K562 (cell line): ENCODE measurements at regions of chr1 and their contacts with region 1.

Region 1: GRCh38 chr1:22760455-22760854 is 49.8 kb downstream of the EPHB2 start:
- DNase-seq: no peak
- ATAC-seq: no peak
- H3K4me3 ChIP-seq: no peak overlapping the region
- H3K27ac ChIP-seq: no peak overlapping the region
- H3K4me1 ChIP-seq: peaks cover 0 to 8% of the 10 kb centered on the region in 2 experiments; a peak in 2 of 5 replicates
- H3K27me3 ChIP-seq: peaks cover 11 to 61% of the 10 kb centered on the region in 2 experiments; a peak in 4 of 5 replicates
- CTCF ChIP-seq: no peak
- EP300 ChIP-seq: no peak
- POLR2A ChIP-seq: no peak
- RAD21 ChIP-seq: no peak

Region 2: GRCh38 chr1:22749919-22750688 is 10.4 kb before region 1 on chr1:
- CTCF ChIA-PET with region 1: no interaction called
- POLR2A ChIA-PET with region 1: interaction called, 10 read pairs
- in situ Hi-C with region 1: no loop called
- intact Hi-C with region 1: no loop called
- DNase-seq: no peak
- ATAC-seq: peak; percentile 53; the same call in 2 of the 3 replicates
- H3K4me3 ChIP-seq: no peak overlapping the region
- H3K27ac ChIP-seq: no peak overlapping the region
- H3K4me1 ChIP-seq: peaks cover 0 to 5% of the 10 kb centered on the region in 2 experiments; a peak in 1 of 5 replicates
- H3K27me3 ChIP-seq: peaks cover 10 to 46% of the 10 kb centered on the region in 2 experiments; a peak in 4 of 5 replicates
- CTCF ChIP-seq: no peak
- EP300 ChIP-seq: no peak
- POLR2A ChIP-seq: no peak
- RAD21 ChIP-seq: no peak